ENCODE measurements at regions of chr3 and their contacts with region 1.

Region 1: DNA sequence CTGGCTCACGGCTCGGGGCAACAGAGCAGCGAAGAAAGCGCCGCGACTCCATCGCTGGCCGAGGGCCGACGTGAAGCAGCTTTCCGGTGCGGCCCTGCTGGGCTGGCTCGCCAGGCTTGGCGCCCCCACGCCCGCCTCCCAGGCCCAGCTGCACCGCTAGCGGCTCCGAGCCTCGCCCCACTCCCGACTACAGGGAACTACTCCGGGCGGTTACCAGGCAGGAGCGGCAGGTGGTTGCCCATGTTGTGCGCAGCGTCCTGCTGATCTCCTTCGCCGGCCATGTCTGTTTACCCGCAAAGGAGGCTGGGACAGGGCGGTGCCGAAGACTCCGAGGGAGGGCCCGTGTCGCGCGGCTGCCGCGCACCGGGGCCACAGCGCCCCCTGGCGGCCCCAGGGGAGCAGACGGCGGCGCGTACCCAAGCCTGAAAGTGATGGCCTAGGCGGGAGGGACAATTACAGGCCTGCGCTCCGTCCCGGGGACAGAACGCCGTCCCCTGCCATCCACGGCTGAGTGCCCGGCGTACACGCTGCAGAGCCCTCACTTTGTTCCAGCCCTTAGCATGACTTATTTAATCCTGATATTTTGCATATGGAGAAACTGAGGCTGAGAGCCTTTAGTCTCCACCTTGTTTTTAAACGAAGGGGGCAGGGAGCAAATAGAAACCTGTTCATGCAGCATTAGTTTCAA is at the start of gene CRBN:
- DNase-seq: peak; percentile 82 to 91 (median 89)
- ATAC-seq: peak; percentile 100
- H3K4me3 ChIP-seq: peak within 1 kb of the TSS; percentile 86
- H3K4me3 Mint-ChIP-seq: peak within 1 kb of the TSS; percentile 88 to 99 (median 94)
- H3K27ac ChIP-seq: peak within 1 kb of the TSS; percentile 87
- H3K27ac Mint-ChIP-seq: peak within 1 kb of the TSS; percentile 89 to 98 (median 95)
- H3K4me1 ChIP-seq: peaks cover 24 to 36% of the 10 kb centered on the region in 2 donors
- H3K4me1 Mint-ChIP-seq: peaks cover 28 to 56% (median 46%) of the 10 kb centered on the region in 7 donors
- H3K27me3 ChIP-seq: no peaks in the 10 kb centered on the region
- H3K27me3 Mint-ChIP-seq: peaks cover 0 to 15% (median 0%) of the 10 kb centered on the region in 5 donors
- total RNA-seq, gene CRBN: 69.1 to 169 (median 134) TPM

Region 2: GRCh38 chr3:2268779-2269178 is 910.8 kb before region 1 on chr3:
- CTCF ChIA-PET with region 1: no interaction called
- POLR2A ChIA-PET with region 1: no interaction called
- intact Hi-C with region 1: loop called in 1 of 2 experiments (anchors 10 kb)
- DNase-seq: no peak
- ATAC-seq: no peak
- H3K4me3 ChIP-seq: no peak overlapping the region
- H3K4me3 Mint-ChIP-seq: no peak overlapping the region
- H3K27ac ChIP-seq: no peak overlapping the region
- H3K27ac Mint-ChIP-seq: no peak overlapping the region
- H3K4me1 ChIP-seq: no peaks in the 10 kb centered on the region
- H3K4me1 Mint-ChIP-seq: no peaks in the 10 kb centered on the region
- H3K27me3 ChIP-seq: no peaks in the 10 kb centered on the region
- H3K27me3 Mint-ChIP-seq: peaks cover 0 to 5% (median 0%) of the 10 kb centered on the region in 5 donors

Region 3: GRCh38 chr3:3027976-3028567 is 151.5 kb before region 1 on chr3:
- CTCF ChIA-PET with region 1: no interaction called
- POLR2A ChIA-PET with region 1: no interaction called
- intact Hi-C with region 1: loop called in 1 of 2 experiments (anchors 2 kb)
- DNase-seq: peak in 7 of 9 donors; percentile 4 to 43 (median 24)
- ATAC-seq: peak; percentile 46
- H3K4me3 ChIP-seq: no peak overlapping the region
- H3K4me3 Mint-ChIP-seq: peak overlapping the region in 7 of 10 donors; percentile 7 to 55 (median 37)
- H3K27ac ChIP-seq: no peak overlapping the region
- H3K27ac Mint-ChIP-seq: peak overlapping the region in 3 of 9 donors; percentile 3 to 23 (median 21)
- H3K4me1 ChIP-seq: peaks cover 5 to 8% of the 10 kb centered on the region in 2 donors
- H3K4me1 Mint-ChIP-seq: peaks cover 3 to 18% (median 13%) of the 10 kb centered on the region in 7 donors
- H3K27me3 ChIP-seq: no peaks in the 10 kb centered on the region
- H3K27me3 Mint-ChIP-seq: peaks cover 0 to 12% (median 0%) of the 10 kb centered on the region in 5 donors

Region 4: GRCh38 chr3:3191675-3192285 is 12.2 kb after region 1 on chr3:
- CTCF ChIA-PET with region 1: interaction called, 5 read pairs
- POLR2A ChIA-PET with region 1: interaction called, 72 read pairs
- intact Hi-C with region 1: loop called in 1 of 2 experiments (anchors 1 kb)
- DNase-seq: peak in 7 of 9 donors; percentile 25 to 58 (median 44)
- ATAC-seq: peak; percentile 89
- H3K4me3 ChIP-seq: peak overlapping the region; percentile 18
- H3K4me3 Mint-ChIP-seq: peak overlapping the region; percentile 54 to 92 (median 78)
- H3K27ac ChIP-seq: peak overlapping the region; percentile 66
- H3K27ac Mint-ChIP-seq: peak overlapping the region; percentile 39 to 98 (median 91)
- H3K4me1 ChIP-seq: peaks cover 20 to 42% of the 10 kb centered on the region in 2 donors
- H3K4me1 Mint-ChIP-seq: peaks cover 27 to 65% (median 60%) of the 10 kb centered on the region in 7 donors
- H3K27me3 ChIP-seq: no peaks in the 10 kb centered on the region
- H3K27me3 Mint-ChIP-seq: peaks cover 0 to 21% (median 0%) of the 10 kb centered on the region in 5 donors

Region 5: DNA sequence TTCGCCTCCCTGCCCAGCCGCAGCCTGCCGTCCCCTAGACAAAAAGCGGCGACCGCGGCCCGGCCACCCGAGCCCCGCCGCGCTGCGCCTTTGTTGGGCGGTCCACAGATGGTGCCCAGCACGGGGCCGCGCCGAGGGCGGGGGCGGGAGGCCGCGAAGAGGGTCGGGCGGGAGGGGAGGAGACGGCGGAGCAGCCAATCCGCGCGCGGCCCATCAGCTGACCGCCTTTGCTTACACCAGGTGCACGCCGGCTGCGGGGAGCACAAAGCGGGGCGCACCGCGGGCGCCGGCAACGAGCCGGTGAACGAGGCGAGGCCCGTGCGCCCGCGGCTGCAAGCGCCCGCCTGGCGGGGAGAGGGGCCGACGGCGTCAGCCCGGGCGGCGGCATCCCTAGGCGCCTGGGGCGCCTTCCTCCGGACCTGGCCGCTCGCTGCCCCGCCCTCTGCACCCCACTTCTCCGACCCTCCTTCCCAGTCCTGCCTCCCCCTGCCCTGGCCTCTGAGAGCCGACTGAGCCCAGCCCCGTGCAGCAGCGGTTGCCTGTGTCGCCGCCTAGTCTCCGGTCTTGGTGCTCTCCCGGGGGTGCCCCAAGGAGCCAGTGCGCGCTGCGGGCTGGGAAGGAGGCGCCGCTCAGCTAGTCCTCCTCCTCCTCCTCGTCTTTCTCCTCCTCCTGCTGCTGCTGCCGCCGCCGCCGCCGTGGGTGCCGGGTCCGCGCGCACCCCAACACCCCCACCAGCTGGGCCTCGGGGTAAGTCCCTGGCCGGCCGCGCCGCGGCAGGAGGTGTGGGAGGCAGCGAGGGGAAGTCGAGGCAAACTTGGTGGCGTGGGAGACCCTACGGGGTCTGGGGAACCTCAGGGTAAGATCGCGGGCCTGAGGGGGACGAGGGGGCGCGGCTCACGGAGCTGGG is 619.9 kb after region 1 on chr3 and contains the start of gene LRRN1:
- CTCF ChIA-PET with region 1: no interaction called
- POLR2A ChIA-PET with region 1: no interaction called
- intact Hi-C with region 1: loop called in 1 of 2 experiments (anchors 5 kb)
- DNase-seq: peak; percentile 6 to 57 (median 38)
- ATAC-seq: peak; percentile 61
- H3K4me3 ChIP-seq: peak within 1 kb of the TSS; percentile 61
- H3K4me3 Mint-ChIP-seq: peak within 1 kb of the TSS; percentile 85 to 94 (median 92)
- H3K27ac ChIP-seq: peak within 1 kb of the TSS; percentile 55
- H3K27ac Mint-ChIP-seq: peak within 1 kb of the TSS in 7 of 9 donors; percentile 56 to 91 (median 81)
- H3K4me1 ChIP-seq: no peaks in the 10 kb centered on the region
- H3K4me1 Mint-ChIP-seq: peaks cover 8 to 26% (median 15%) of the 10 kb centered on the region in 7 donors
- H3K27me3 ChIP-seq: no peaks in the 10 kb centered on the region
- H3K27me3 Mint-ChIP-seq: peaks cover 33 to 60% (median 48%) of the 10 kb centered on the region in 5 donors
- total RNA-seq, gene LRRN1: 0.12 to 2.5 (median 1.8) TPM in 4 of 5 experiments, not detected in the other

Region 6: GRCh38 chr3:4322635-4323034 is 1143.1 kb after region 1 on chr3:
- CTCF ChIA-PET with region 1: no interaction called
- POLR2A ChIA-PET with region 1: no interaction called
- intact Hi-C with region 1: no loop called
- DNase-seq: no peak
- ATAC-seq: no peak
- H3K4me3 ChIP-seq: no peak overlapping the region
- H3K4me3 Mint-ChIP-seq: no peak overlapping the region
- H3K27ac ChIP-seq: no peak overlapping the region
- H3K27ac Mint-ChIP-seq: no peak overlapping the region
- H3K4me1 ChIP-seq: no peaks in the 10 kb centered on the region
- H3K4me1 Mint-ChIP-seq: peaks cover 0 to 19% (median 5%) of the 10 kb centered on the region in 7 donors
- H3K27me3 ChIP-seq: no peaks in the 10 kb centered on the region
- H3K27me3 Mint-ChIP-seq: no peaks in the 10 kb centered on the region

Measured in naive thymus-derived CD4-positive, alpha-beta T cell (primary cell).